ENCODE measurements at regions of chr7 and their contacts with region 1.

Region 1: GRCh38 chr7:87345166-87345927 is at the start of gene CROT:
- DNase-seq: peak; percentile 95
- ATAC-seq: peak; percentile 98
- H3K4me3 Mint-ChIP-seq: peak within 1 kb of the TSS; percentile 96
- H3K27ac Mint-ChIP-seq: peak within 1 kb of the TSS; percentile 96
- H3K4me1 Mint-ChIP-seq: peaks cover 25% of the 10 kb centered on the region
- H3K27me3 Mint-ChIP-seq: no peaks in the 10 kb centered on the region
- CTCF ChIP-seq: no peak
- total RNA-seq, gene CROT: 7.9 and 9.2 TPM in 2 replicates

Region 2: DNA sequence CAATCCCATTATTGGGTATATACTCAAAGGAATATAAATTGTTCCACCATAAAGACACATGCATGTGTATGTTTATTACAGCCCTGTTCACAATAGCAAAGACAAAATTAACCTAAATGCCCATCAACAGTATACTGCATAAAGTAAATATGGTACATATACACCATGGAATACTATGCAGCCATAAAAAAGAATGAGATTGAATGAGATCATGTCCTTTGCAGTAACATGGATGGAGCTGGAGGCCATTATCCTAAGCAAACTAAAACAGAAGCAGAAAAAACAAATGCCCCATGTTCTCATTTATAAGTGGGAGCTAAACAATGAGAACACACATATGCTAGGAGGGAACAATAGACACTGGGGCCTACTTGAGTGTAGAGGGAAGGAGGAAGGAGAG is 44.6 kb before region 1 on chr7:
- CTCF ChIA-PET with region 1: no interaction called
- POLR2A ChIA-PET with region 1: no interaction called
- intact Hi-C with region 1: no loop called
- DNase-seq: no peak
- ATAC-seq: no peak
- H3K4me3 Mint-ChIP-seq: no peak overlapping the region
- H3K27ac Mint-ChIP-seq: no peak overlapping the region
- H3K4me1 Mint-ChIP-seq: no peaks in the 10 kb centered on the region
- H3K27me3 Mint-ChIP-seq: peaks cover 8% of the 10 kb centered on the region
- CTCF ChIP-seq: no peak

Region 3: GRCh38 chr7:87933945-87934698 is 588.8 kb after region 1 on chr7 and contains the start of gene ADAM22:
- CTCF ChIA-PET with region 1: no interaction called
- POLR2A ChIA-PET with region 1: no interaction called
- intact Hi-C with region 1: loop called (anchors 1 kb)
- DNase-seq: peak; percentile 68
- ATAC-seq: peak; percentile 97
- H3K4me3 Mint-ChIP-seq: peak within 1 kb of the TSS; percentile 89
- H3K27ac Mint-ChIP-seq: peak within 1 kb of the TSS; percentile 32
- H3K4me1 Mint-ChIP-seq: peaks cover 14% of the 10 kb centered on the region
- H3K27me3 Mint-ChIP-seq: peaks cover 11% of the 10 kb centered on the region
- CTCF ChIP-seq: no peak
- total RNA-seq, gene ADAM22: 0.71 and 0.88 TPM in 2 replicates

Region 4: GRCh38 chr7:88219781-88220747 is 874.7 kb after region 1 on chr7 and contains the start of gene SRI:
- CTCF ChIA-PET with region 1: no interaction called
- POLR2A ChIA-PET with region 1: no interaction called
- intact Hi-C with region 1: loop called (anchors 2 kb)
- DNase-seq: peak; percentile 94
- ATAC-seq: peak; percentile 96
- H3K4me3 Mint-ChIP-seq: peak within 1 kb of the TSS; percentile 95
- H3K27ac Mint-ChIP-seq: peak within 1 kb of the TSS; percentile 92
- H3K4me1 Mint-ChIP-seq: peaks cover 25% of the 10 kb centered on the region
- H3K27me3 Mint-ChIP-seq: no peaks in the 10 kb centered on the region
- CTCF ChIP-seq: peak; percentile 73
- total RNA-seq, gene SRI: 97.4 and 101 TPM in 2 replicates

Measured in activated B cell treated with CpG ODN at 0.5 μM for 24 hours (primary cell).